ENCODE measurements at regions of chr9 and their contacts with region 1.

Region 1: DNA sequence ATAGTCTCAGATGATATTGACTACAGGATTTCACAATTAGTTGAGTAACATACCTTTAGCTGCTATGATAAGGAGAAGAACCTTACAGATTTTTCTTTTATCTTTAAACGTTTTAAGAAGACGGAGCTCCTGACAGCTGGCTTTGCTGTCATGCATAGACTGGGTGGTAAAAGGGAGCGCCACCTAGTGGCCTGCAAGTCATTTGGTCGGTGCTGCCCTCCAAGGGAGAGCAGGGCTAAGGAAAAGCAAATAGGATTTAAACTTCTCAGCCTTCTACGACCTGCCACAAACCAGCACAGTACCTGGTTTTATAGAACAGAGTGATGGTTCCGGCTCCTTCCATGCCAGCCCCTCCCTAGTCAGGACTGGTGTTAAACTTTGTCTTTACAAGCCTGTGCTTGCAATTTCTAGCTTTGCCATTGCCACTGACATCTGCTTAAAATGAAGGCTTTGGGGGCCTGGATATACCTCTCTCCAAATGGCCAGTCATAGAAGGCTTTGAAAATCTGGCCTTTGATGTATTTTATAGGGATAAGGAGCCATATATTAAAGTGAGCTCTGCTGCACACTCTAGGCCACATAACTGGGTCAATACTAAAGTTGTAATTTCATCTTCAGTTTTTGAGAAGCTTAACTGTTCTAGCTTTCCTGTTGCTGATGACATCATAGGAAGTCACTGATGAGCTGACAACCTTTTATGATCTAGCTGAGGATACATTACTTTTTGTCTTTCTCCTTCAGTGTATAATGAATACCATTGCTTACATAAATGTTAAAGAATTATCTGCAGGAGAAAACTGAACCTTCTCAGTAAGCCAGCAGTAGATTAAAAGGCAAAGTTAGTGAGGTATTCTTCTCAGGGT is 31.1 kb upstream of the ADAMTSL1 start:
- DNase-seq: peak; percentile 71
- H3K4me3 ChIP-seq: no peak overlapping the region
- H3K27ac ChIP-seq: no peak overlapping the region
- H3K27me3 ChIP-seq: no peaks in the 10 kb centered on the region
- CTCF ChIP-seq: peak; percentile 94

Region 2: GRCh38 chr9:16693616-16694015 is 1749.2 kb before region 1 on chr9:
- CTCF ChIA-PET with region 1: interaction called, 10 read pairs
- POLR2A ChIA-PET with region 1: no interaction called
- DNase-seq: no peak
- H3K4me3 ChIP-seq: no peak overlapping the region
- H3K27ac ChIP-seq: no peak overlapping the region
- H3K27me3 ChIP-seq: no peaks in the 10 kb centered on the region
- CTCF ChIP-seq: no peak

Region 3: DNA sequence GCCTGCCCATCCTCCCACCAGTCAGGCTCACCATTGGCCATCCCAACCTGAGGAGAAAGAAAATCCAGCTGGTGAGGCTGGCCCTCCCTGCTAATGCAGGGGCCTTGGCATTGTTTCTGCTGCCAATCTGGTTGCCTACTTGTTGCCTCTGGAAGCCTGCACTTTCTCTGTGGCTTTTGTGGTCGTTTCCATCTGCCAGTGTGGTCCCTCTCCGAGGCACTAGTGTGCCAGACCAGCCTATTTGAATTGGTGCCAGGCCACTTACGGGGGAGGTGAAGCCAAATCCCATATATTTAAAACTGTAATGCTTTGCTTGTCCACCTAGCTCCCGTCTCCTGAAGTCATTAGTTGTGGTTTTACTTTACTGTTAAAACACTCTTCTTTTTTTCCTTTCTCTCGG is 182.3 kb before region 1 on chr9:
- CTCF ChIA-PET with region 1: interaction called, 137 read pairs
- POLR2A ChIA-PET with region 1: interaction called, 4 read pairs
- DNase-seq: no peak
- H3K4me3 ChIP-seq: no peak overlapping the region
- H3K27ac ChIP-seq: no peak overlapping the region
- H3K27me3 ChIP-seq: no peaks in the 10 kb centered on the region
- CTCF ChIP-seq: no peak

Region 4: GRCh38 chr9:18429070-18429469 is 13.8 kb before region 1 on chr9:
- CTCF ChIA-PET with region 1: interaction called, 44 read pairs
- POLR2A ChIA-PET with region 1: no interaction called
- DNase-seq: no peak
- H3K4me3 ChIP-seq: no peak overlapping the region
- H3K27ac ChIP-seq: no peak overlapping the region
- H3K27me3 ChIP-seq: no peaks in the 10 kb centered on the region
- CTCF ChIP-seq: no peak

Region 5: GRCh38 chr9:18467696-18468095 is 24.8 kb after region 1 on chr9:
- CTCF ChIA-PET with region 1: interaction called, 16 read pairs
- POLR2A ChIA-PET with region 1: no interaction called
- DNase-seq: no peak
- H3K4me3 ChIP-seq: no peak overlapping the region
- H3K27ac ChIP-seq: no peak overlapping the region
- H3K27me3 ChIP-seq: no peaks in the 10 kb centered on the region
- CTCF ChIP-seq: no peak

Region 6: GRCh38 chr9:18485714-18486113 is 42.9 kb after region 1 on chr9:
- CTCF ChIA-PET with region 1: interaction called, 10 read pairs
- POLR2A ChIA-PET with region 1: interaction called, 3 read pairs
- DNase-seq: no peak
- H3K4me3 ChIP-seq: no peak overlapping the region
- H3K27ac ChIP-seq: no peak overlapping the region
- H3K27me3 ChIP-seq: no peaks in the 10 kb centered on the region
- CTCF ChIP-seq: no peak

Measured in AG04450 (cell line).